ENCODE measurements at regions of chr10 and their contacts with region 1.

Region 1: GRCh38 chr10:112949875-112950507 is at the start of gene TCF7L2:
- DNase-seq: peak; percentile 97
- H3K4me3 ChIP-seq: peak within 1 kb of the TSS; percentile 73 to 100 (median 98)
- H3K27ac ChIP-seq: peak within 1 kb of the TSS; percentile 91
- H3K4me1 ChIP-seq: peaks cover 26% of the 10 kb centered on the region
- H3K27me3 ChIP-seq: no peaks in the 10 kb centered on the region
- CTCF ChIP-seq: peak in 1 of 2 donors; percentile 6
- POLR2A ChIP-seq: no peak
- total RNA-seq, gene TCF7L2: 21.8 and 22.1 TPM in 2 replicates

Region 2: GRCh38 chr10:112778579-112778978 is 171.4 kb before region 1 on chr10:
- CTCF ChIA-PET with region 1: interaction called, 3 read pairs
- POLR2A ChIA-PET with region 1: no interaction called
- dilution Hi-C with region 1: no loop called
- intact Hi-C with region 1: loop called (anchors 1 kb)
- DNase-seq: peak; percentile 58
- H3K4me3 ChIP-seq: no peak overlapping the region
- H3K27ac ChIP-seq: no peak overlapping the region
- H3K4me1 ChIP-seq: peaks cover 17% of the 10 kb centered on the region
- H3K27me3 ChIP-seq: no peaks in the 10 kb centered on the region
- CTCF ChIP-seq: no peak
- POLR2A ChIP-seq: no peak

Region 3: DNA sequence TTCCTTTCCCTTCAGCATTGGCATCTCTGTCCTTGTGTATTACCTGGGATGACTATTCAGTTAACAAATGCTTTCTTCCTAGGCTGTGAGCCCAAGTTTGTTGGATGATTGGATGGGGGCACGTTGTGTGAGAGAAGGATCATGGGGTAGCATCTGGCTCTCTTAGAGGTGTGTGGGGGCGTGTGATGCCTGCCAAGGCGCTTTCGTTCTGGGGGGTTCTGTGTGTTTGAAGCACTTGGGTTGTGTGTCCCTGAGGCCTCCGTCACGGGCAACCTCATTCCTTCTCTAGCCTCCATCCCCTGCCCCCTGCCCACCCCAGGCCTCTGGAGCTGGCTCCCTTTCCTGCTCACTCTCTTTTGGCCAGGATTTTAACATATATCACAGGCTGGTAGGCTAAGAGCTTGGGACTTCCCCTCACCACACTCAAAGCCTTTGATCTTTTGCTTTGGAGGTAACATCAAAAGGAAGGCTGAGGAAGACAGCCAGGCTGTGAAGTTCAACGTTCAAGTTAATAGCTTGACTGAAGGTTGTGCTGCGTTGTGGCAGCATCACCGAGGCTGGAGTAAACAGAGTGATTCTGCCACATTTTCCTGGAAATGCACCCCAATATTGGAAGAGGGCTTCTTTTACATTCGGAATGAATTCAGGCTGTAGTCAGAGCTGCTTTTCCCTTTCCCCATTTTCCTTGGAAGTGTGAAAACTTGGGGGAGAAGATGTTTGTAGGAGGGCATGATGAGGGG is 57.2 kb after region 1 on chr10:
- CTCF ChIA-PET with region 1: no interaction called
- POLR2A ChIA-PET with region 1: no interaction called
- dilution Hi-C with region 1: no loop called
- intact Hi-C with region 1: no loop called
- DNase-seq: no peak
- H3K4me3 ChIP-seq: no peak overlapping the region
- H3K27ac ChIP-seq: no peak overlapping the region
- H3K4me1 ChIP-seq: no peaks in the 10 kb centered on the region
- H3K27me3 ChIP-seq: no peaks in the 10 kb centered on the region
- CTCF ChIP-seq: no peak
- POLR2A ChIP-seq: no peak

Region 4: DNA sequence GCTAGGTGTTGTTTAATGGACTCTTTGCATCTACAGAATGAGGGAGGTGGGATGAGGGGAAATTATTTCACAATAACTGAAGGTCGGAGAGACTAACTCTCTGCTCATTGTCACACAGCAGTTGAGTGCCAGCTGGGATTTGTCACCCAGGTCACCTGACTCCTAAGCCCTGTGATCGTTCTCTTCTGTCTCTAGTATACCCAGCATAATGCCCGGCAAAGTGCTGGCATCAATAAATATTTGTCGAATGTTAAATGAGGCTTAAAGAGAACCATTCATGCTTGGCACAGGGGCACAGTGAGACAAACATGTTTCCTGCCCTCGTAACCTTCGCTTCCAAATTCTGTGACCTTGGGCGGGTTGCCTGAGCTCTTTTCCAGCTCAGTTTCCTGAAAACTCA is 70.8 kb after region 1 on chr10:
- CTCF ChIA-PET with region 1: no interaction called
- POLR2A ChIA-PET with region 1: no interaction called
- dilution Hi-C with region 1: no loop called
- intact Hi-C with region 1: loop called (anchors 2 kb)
- DNase-seq: no peak
- H3K4me3 ChIP-seq: no peak overlapping the region
- H3K27ac ChIP-seq: no peak overlapping the region
- H3K4me1 ChIP-seq: peaks cover 18% of the 10 kb centered on the region
- H3K27me3 ChIP-seq: no peaks in the 10 kb centered on the region
- CTCF ChIP-seq: no peak
- POLR2A ChIP-seq: no peak

Region 5: DNA sequence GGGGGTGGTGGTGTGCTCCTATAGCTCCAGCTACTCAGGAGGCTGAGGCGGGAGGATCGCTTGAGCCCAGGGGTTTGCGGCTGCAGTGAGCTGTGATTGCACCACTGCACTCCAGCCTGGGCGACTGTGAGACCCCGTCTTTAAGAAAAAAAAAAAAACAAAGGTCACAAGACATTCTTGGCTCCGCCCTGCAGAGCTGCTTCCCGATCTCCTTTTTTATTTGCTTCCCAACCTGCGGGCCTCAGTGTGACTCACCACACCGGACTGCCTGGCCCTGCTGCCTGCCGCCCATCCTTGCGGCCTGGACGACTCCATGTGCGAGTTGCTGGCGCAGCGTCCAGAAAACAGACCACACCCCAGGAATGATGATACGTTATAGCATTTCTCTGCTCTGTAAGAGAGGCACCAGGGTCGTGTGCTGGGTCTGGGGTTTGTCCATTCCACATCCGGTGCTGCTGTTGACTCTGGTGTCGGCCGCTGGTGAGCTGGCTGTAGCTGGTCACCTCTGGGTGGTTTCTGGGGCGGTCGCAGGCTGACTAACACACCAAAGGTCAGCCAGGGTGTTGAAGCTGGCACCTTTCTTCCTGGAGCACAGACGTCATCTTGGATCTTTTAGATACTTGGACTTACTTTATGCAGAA is 123.7 kb after region 1 on chr10:
- CTCF ChIA-PET with region 1: interaction called, 4 read pairs
- POLR2A ChIA-PET with region 1: interaction called, 4 read pairs
- dilution Hi-C with region 1: no loop called
- intact Hi-C with region 1: loop called (anchors 1 kb)
- DNase-seq: peak; percentile 92
- H3K4me3 ChIP-seq: no peak overlapping the region
- H3K27ac ChIP-seq: peak overlapping the region; percentile 76
- H3K4me1 ChIP-seq: peaks cover 35% of the 10 kb centered on the region
- H3K27me3 ChIP-seq: no peaks in the 10 kb centered on the region
- CTCF ChIP-seq: no peak
- POLR2A ChIP-seq: peak; percentile 78

Region 6: DNA sequence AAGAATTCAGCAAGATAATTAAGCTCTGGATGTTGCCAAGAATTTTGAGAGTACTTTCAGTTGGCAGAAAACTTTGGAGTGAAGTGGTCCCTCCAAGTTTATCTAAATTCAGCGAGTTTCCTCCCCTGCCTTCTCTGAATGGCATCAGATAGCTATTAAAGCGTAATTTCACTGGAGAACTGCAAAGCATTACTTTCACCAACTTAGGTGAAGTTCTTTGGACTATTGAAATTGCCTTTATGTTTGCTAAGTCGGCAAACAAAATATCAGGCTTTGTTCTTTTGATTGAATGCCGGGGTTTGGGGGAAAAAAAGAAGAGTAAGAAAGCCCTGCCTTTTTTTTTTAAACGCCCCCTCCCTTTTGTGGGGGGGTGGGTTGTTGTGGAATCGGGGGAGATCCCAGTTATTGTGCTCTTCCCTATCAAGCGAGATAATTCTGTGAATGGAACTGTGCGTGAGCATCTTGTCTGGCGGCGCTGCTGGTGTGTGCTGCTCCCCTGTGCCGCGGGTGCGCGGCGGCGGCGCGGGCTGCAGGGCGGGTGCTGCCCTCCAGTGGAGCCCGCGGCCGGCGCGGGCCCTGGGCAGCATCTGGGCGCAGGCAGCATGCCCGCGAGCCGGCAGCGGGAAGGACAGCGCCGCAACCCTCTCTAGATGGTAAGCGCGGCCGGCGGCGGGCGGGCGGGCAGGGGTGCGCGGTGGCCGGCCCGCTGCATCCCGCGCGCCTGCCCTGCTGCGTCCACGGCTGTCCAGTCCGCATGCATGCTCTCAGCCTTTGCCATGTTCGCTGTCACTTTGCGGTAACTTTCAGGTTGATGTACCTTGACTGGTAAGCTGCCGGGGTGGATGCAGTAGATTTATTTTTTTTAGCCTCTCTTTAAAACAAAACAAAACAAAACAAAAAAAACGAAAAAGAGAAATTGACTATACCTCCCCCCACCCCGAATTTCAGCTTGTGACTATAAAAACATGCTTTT is 176.5 kb after region 1 on chr10:
- CTCF ChIA-PET with region 1: interaction called, 4 read pairs
- POLR2A ChIA-PET with region 1: no interaction called
- dilution Hi-C with region 1: no loop called
- intact Hi-C with region 1: loop called (anchors 1 kb)
- DNase-seq: peak; percentile 76
- H3K4me3 ChIP-seq: peak overlapping the region in 1 of 3 experiments; percentile 44
- H3K27ac ChIP-seq: no peak overlapping the region
- H3K4me1 ChIP-seq: peaks cover 4% of the 10 kb centered on the region
- H3K27me3 ChIP-seq: no peaks in the 10 kb centered on the region
- CTCF ChIP-seq: peak; percentile 56 to 77
- POLR2A ChIP-seq: no peak